A549 (cell line): ENCODE measurements at regions of chr5 and their contacts with region 1.

Region 1: DNA sequence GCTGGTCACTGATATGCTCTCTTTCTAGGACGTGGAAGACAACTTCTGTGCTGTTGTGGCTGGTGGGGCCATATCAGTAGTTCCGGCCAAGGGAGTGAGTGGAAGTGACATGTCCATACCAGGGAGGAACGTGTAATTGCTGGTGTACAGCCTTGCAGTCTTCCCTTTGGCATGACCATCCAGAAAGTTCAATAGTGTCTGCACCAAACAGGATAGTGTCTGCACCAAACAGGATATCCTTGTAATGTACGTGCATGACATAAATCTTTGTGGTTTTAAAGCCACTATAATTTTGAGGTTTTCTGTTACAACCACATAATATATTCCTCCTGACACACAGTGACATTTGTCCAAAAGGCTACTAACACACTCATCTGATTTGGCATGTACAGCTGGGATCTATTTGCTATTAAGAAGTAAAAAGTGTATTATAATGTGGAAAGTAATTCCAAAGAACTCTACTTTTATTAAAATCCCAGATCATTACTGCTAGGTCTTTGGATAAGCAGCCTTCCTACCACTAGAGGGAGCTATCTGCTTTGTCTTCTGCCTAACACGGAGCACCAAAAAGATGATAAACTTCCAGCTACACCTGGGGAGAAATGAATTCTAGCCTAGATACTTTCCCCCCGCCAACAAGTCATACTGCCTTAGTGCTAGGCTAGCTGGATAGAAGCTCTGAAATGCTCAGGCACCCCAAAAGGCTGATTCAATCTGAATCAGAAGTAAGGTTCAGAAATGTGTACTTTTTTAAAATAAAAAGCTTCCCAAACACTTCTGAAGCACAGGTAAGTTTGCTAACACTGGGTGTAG is 52.7 kb downstream of the RNF145 start:
- DNase-seq: peak; percentile 73 to 81
- ATAC-seq: peak; percentile 79 to 83
- H3K4me3 ChIP-seq: no peak overlapping the region
- H3K27ac ChIP-seq: peak overlapping the region; percentile 56 to 60; a peak in 4 of 6 replicates
- H3K4me1 ChIP-seq: peaks cover 41% of the 10 kb centered on the region
- CTCF ChIP-seq: peak; percentile 97
- EP300 ChIP-seq: no peak
- POLR2A ChIP-seq: no peak
- RAD21 ChIP-seq: peak; percentile 92 to 93

Region 2: GRCh38 chr5:158802941-158803341 is 353.7 kb before region 1 on chr5:
- CTCF ChIA-PET with region 1: no interaction called
- POLR2A ChIA-PET with region 1: no interaction called
- DNase-seq: no peak
- ATAC-seq: no peak
- H3K4me3 ChIP-seq: no peak overlapping the region
- H3K27ac ChIP-seq: no peak overlapping the region
- H3K4me1 ChIP-seq: no peaks in the 10 kb centered on the region
- CTCF ChIP-seq: no peak
- EP300 ChIP-seq: no peak
- POLR2A ChIP-seq: no peak
- RAD21 ChIP-seq: no peak

Region 3: DNA sequence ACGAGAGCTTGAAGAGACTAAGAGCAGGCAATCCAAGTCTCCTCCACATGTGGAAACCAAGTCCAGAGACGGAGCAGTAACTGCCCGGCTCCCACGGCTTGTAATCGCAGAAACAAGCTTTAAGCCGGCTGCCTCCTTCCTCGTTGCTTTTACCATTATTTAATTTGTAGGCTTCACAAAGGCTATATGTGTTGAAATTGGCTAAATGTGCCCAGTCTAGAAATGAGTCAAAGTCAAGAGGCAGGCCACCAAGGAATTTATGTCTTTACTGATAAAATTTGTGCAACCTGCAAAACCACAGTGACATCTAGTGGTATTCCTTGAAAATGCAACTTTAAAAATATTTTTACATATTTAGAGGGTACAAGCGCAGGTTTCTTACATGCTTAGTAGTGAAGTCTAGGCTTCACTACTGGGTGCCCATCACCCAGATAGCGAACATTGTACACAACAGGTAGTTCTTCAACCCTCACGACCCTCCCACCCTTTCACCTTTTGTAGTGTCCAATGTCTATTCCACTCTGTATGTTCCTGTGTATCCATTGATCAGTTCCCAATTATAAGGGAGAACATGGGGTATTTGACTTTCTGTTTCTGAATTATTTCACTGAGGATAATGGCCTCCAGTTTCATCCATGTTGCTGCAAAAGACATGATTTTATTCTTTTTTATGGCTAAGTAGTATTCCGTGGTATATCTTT is 23.4 kb before region 1 on chr5:
- CTCF ChIA-PET with region 1: no interaction called
- POLR2A ChIA-PET with region 1: no interaction called
- DNase-seq: peak; percentile 25 to 65
- ATAC-seq: peak; percentile 61 to 78
- H3K4me3 ChIP-seq: no peak overlapping the region
- H3K27ac ChIP-seq: peak overlapping the region; percentile 4 to 29; a peak in 1 of 6 replicates
- H3K4me1 ChIP-seq: peaks cover 25% of the 10 kb centered on the region
- CTCF ChIP-seq: peak; percentile 93
- EP300 ChIP-seq: no peak
- POLR2A ChIP-seq: no peak
- RAD21 ChIP-seq: peak; percentile 92 to 93

Region 4: GRCh38 chr5:159184858-159185381 is 28.3 kb after region 1 on chr5:
- CTCF ChIA-PET with region 1: interaction called, 23 read pairs
- POLR2A ChIA-PET with region 1: no interaction called
- DNase-seq: peak in 1 of 2 experiments; percentile 65
- ATAC-seq: peak; percentile 72 to 74
- H3K4me3 ChIP-seq: no peak overlapping the region
- H3K27ac ChIP-seq: peak overlapping the region; percentile 91 to 94
- H3K4me1 ChIP-seq: peaks cover 98% of the 10 kb centered on the region
- CTCF ChIP-seq: no peak
- EP300 ChIP-seq: peak in 1 of 2 experiments; percentile 61; a peak in 2 of 5 replicates
- POLR2A ChIP-seq: no peak
- RAD21 ChIP-seq: no peak

Region 5: GRCh38 chr5:159209438-159210305 is 53.0 kb after region 1 on chr5 and contains the start of gene RNF145:
- CTCF ChIA-PET with region 1: interaction called, 22 read pairs
- POLR2A ChIA-PET with region 1: interaction called, 5 read pairs
- DNase-seq: peak; percentile 74 to 86
- ATAC-seq: peak; percentile 74 to 80
- H3K4me3 ChIP-seq: peak within 1 kb of the TSS; percentile 77
- H3K27ac ChIP-seq: peak within 1 kb of the TSS; percentile 97 to 100
- H3K4me1 ChIP-seq: peaks cover 27% of the 10 kb centered on the region
- CTCF ChIP-seq: no peak
- EP300 ChIP-seq: no peak
- POLR2A ChIP-seq: peak; percentile 45; the same call in 1 of the 2 replicates
- RAD21 ChIP-seq: no peak; a peak in 1 of 5 replicates
- polyA plus RNA-seq, gene RNF145: 122 and 147 TPM in 2 replicates

Region 6: GRCh38 chr5:159274676-159275075 is 118.0 kb after region 1 on chr5:
- CTCF ChIA-PET with region 1: interaction called, 13 read pairs
- POLR2A ChIA-PET with region 1: no interaction called
- DNase-seq: no peak
- ATAC-seq: no peak
- H3K4me3 ChIP-seq: no peak overlapping the region
- H3K27ac ChIP-seq: no peak overlapping the region
- H3K4me1 ChIP-seq: no peaks in the 10 kb centered on the region
- CTCF ChIP-seq: no peak
- EP300 ChIP-seq: no peak
- POLR2A ChIP-seq: no peak
- RAD21 ChIP-seq: no peak

Region 7: GRCh38 chr5:159311063-159311462 is 154.4 kb after region 1 on chr5:
- CTCF ChIA-PET with region 1: interaction called, 100 read pairs
- POLR2A ChIA-PET with region 1: no interaction called
- DNase-seq: no peak
- ATAC-seq: no peak
- H3K4me3 ChIP-seq: no peak overlapping the region
- H3K27ac ChIP-seq: no peak overlapping the region
- H3K4me1 ChIP-seq: no peaks in the 10 kb centered on the region
- CTCF ChIP-seq: no peak
- EP300 ChIP-seq: no peak
- POLR2A ChIP-seq: no peak
- RAD21 ChIP-seq: no peak

Region 8: GRCh38 chr5:159331093-159331973 is 174.7 kb after region 1 on chr5:
- CTCF ChIA-PET with region 1: interaction called, 12 read pairs
- POLR2A ChIA-PET with region 1: no interaction called
- DNase-seq: peak; percentile 71 to 76
- ATAC-seq: peak; percentile 95 to 96
- H3K4me3 ChIP-seq: peak overlapping the region; percentile 53
- H3K27ac ChIP-seq: peak overlapping the region; percentile 88 to 96
- H3K4me1 ChIP-seq: peaks cover 21% of the 10 kb centered on the region; the same call in 2 of the 3 replicates
- CTCF ChIP-seq: peak; percentile 74
- EP300 ChIP-seq: no peak
- POLR2A ChIP-seq: no peak
- RAD21 ChIP-seq: peak; percentile 63 to 82